ENCODE measurements at regions of chr7 and their contacts with region 1.

Region 1: GRCh38 chr7:76020031-76020714 is 25.8 kb upstream of the TMEM120A start:
- DNase-seq: no peak
- H3K4me3 ChIP-seq: no peak overlapping the region
- H3K27me3 ChIP-seq: no peaks in the 10 kb centered on the region
- CTCF ChIP-seq: peak; percentile 88

Region 2: GRCh38 chr7:75861636-75862035 is 158.5 kb before region 1 on chr7:
- CTCF ChIA-PET with region 1: interaction called, 129 read pairs
- POLR2A ChIA-PET with region 1: interaction called, 7 read pairs
- DNase-seq: no peak
- H3K4me3 ChIP-seq: no peak overlapping the region
- H3K27me3 ChIP-seq: no peaks in the 10 kb centered on the region
- CTCF ChIP-seq: no peak

Region 3: DNA sequence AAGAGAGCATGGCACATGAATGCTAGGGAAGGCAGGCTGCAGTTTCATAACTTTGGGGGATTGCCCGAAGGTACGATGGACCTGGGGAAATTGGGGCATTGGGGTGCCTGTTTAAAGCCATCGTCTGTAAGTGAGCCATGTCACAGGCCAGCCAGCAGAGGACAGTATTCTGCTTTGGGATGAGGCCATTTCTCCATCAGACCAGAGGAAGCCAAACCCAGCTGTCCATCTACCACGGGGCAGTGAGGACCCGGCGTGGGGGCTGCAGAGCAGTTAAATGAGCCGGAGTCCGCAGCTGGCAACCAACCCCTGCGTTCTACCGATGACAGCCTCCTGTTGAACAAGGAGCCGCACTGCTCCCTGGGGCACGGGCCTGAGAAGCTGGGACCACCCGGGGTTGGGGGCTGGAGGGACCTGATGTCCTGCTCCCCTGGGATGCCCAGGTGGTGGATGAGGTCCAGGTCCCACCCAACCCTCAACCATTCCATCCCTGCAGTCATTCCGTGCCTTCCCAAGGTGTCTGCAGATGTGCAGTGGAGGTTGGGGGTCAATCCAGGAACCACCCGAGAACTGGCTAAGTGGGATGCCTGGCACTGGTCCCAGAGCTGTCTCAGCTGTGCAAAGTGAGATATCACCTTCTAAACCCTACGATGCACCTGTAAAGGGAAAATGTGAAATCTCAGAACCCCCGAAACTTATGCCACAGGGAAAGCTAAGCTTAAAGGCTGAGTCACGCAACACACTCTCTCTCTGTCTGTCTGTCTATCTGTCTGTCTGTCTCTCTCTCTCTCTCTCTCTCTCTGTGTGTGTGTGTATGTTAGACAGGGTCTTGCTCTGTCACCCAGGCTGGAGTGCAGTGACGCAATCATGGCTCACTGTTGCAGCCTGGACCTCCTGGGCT is 153.4 kb before region 1 on chr7:
- CTCF ChIA-PET with region 1: interaction called, 129 read pairs
- POLR2A ChIA-PET with region 1: interaction called, 7 read pairs
- DNase-seq: no peak
- H3K4me3 ChIP-seq: no peak overlapping the region
- H3K27me3 ChIP-seq: no peaks in the 10 kb centered on the region
- CTCF ChIP-seq: peak; percentile 98

Region 4: DNA sequence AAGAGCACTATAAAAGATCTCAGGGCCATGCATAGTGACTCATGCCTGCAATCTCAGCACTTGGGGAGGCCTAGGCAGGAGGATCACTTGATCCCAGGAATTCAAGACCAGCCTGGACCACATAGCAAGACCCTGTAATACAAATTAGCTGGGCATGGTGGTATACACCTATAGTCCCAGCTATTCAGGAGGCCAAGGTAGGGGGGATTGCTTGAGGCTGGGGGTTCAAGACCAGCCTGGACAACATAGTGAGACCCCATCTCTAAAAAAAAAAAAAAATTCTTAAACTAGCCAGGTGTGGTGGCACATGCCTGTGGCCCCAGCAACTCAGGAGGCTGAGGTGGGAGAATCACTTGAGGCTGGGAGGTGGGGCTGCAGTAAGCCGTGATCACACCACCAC is 11.8 kb after region 1 on chr7:
- CTCF ChIA-PET with region 1: interaction called, 16 read pairs
- POLR2A ChIA-PET with region 1: no interaction called
- DNase-seq: no peak
- H3K4me3 ChIP-seq: no peak overlapping the region
- H3K27me3 ChIP-seq: no peaks in the 10 kb centered on the region
- CTCF ChIP-seq: no peak

Region 5: DNA sequence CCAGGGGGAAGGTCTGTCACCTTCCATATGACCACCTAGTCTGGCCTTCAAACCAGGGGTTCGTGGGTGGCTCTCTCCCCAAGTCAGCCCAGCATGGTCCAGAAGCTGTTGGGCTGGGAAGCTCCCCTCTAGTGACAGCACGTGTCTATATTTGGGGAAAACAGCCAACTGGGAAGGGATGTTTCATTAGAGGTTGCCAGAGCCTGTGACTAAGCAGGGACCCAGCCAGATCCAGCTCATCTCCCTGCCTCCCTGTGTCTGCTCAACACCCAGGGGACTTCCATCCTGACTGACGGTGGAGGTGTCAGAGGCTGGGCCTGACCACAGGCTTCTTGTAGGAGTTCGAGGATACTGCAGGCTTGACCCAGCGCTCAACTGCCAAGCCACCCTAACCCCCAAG is 17.1 kb after region 1 on chr7:
- CTCF ChIA-PET with region 1: interaction called, 16 read pairs
- POLR2A ChIA-PET with region 1: no interaction called
- DNase-seq: peak; percentile 57
- H3K4me3 ChIP-seq: no peak overlapping the region
- H3K27me3 ChIP-seq: no peaks in the 10 kb centered on the region
- CTCF ChIP-seq: no peak